Common myeloid progenitor, CD34-positive (primary cell): ENCODE measurements at regions of chr11 and their contacts with region 1.

Region 1: DNA sequence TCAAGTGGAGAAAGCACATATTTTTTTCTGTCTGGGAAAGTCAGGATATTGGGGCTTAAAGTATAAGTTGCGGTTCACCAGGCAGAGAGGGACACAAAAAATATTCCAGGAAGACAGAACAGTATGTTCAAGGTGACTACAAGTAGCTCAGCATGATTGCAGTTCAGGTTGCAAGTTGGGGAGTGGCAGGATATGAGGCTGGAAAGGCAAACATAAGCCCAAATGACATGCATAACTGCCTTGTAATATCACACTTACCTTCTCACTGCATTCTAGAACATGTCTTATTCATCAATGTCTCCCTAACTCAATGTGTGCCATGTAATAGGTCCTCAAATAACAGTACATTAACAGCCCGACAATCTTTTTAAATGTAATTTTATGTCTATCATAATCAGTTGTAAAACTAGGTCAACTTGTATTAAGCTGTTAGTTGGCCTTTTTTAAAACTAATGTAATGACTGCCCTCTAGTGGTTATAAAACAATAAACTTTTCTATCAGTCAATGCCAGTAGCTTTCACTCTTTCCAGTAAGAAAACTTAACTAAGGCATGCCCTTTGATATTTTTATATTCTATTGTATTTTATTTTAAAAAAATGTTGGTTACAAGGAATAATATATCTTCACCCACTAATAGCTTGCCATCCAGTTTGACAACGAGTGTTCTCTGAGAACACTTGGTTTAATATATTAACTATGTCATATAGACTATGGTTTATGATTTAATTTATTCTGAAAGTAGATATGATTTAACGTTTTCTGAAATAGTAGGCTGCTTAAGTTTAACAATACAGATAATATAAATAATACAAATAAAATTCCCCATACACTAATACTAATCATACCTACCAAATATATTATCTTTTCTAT is 39.4 kb upstream of the CFAP300 start:
- DNase-seq: peak; percentile 25 to 66 (median 58)
- H3K4me3 ChIP-seq: no peak overlapping the region
- H3K27ac ChIP-seq: no peak overlapping the region
- H3K4me1 ChIP-seq: no peaks in the 10 kb centered on the region
- H3K27me3 ChIP-seq: peaks cover 4 to 31% (median 9%) of the 10 kb centered on the region in 5 experiments

Region 2: GRCh38 chr11:101848262-101848661 is 159.5 kb before region 1 on chr11:
- CTCF ChIA-PET with region 1: interaction called, 14 read pairs
- POLR2A ChIA-PET with region 1: no interaction called
- DNase-seq: peak; percentile 6 to 42 (median 33)
- H3K4me3 ChIP-seq: no peak overlapping the region
- H3K27ac ChIP-seq: no peak overlapping the region
- H3K4me1 ChIP-seq: no peaks in the 10 kb centered on the region
- H3K27me3 ChIP-seq: no peaks in the 10 kb centered on the region

Region 3: GRCh38 chr11:101860696-101861427 is 146.9 kb before region 1 on chr11:
- CTCF ChIA-PET with region 1: interaction called, 110 read pairs
- POLR2A ChIA-PET with region 1: no interaction called
- DNase-seq: peak; percentile 30 to 60 (median 54)
- H3K4me3 ChIP-seq: no peak overlapping the region
- H3K27ac ChIP-seq: no peak overlapping the region
- H3K4me1 ChIP-seq: no peaks in the 10 kb centered on the region
- H3K27me3 ChIP-seq: peaks cover 0 to 4% (median 0%) of the 10 kb centered on the region in 5 experiments

Region 4: GRCh38 chr11:101866619-101867491 is 140.9 kb before region 1 on chr11:
- CTCF ChIA-PET with region 1: interaction called, 110 read pairs
- POLR2A ChIA-PET with region 1: no interaction called
- DNase-seq: no peak
- H3K4me3 ChIP-seq: no peak overlapping the region
- H3K27ac ChIP-seq: no peak overlapping the region
- H3K4me1 ChIP-seq: no peaks in the 10 kb centered on the region
- H3K27me3 ChIP-seq: peaks cover 1 to 8% (median 2%) of the 10 kb centered on the region in 5 experiments

Region 5: GRCh38 chr11:101996111-101996510 is 11.7 kb before region 1 on chr11:
- CTCF ChIA-PET with region 1: interaction called, 12 read pairs
- POLR2A ChIA-PET with region 1: no interaction called
- DNase-seq: no peak
- H3K4me3 ChIP-seq: no peak overlapping the region
- H3K27ac ChIP-seq: no peak overlapping the region
- H3K4me1 ChIP-seq: no peaks in the 10 kb centered on the region
- H3K27me3 ChIP-seq: no peaks in the 10 kb centered on the region

Region 6: DNA sequence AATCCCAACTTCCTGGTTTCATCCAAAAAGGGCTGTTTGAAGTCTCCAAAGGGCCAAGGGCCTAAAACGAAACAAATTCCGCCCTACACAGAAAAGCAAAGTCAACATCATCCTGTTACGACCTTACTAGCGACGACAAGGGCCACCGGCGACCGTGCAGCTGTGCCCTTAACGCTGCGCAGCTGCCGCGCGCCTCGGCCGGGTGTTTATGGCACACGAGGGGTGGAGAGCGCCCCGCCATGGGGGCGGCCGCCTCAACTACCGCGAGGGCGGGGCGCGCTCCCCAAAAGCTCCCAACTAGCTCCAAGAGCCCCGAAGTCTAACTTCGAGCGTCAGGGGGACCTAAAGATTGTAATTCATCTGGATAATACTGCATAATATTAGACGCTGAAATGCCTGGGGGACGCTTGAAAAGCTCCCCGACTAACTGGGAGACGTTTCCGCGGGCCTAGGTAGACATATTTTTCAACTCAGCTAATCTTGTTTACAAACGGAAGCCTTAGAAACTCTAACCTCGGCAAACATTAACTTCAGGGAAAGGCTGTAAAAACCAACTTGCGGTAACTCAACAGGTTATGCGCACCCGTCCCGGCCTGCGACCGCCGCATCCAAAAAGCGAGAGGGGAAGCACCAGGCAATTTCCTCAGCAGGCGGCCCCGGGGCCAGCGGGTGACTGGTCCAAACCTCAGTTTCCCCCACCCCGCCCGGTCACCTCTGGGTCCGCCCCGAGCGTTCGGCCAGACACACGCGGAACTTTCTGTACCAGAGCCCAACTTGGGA is 444.1 kb after region 1 on chr11:
- CTCF ChIA-PET with region 1: no interaction called
- POLR2A ChIA-PET with region 1: no interaction called
- DNase-seq: peak; percentile 88 to 94 (median 93)
- H3K4me3 ChIP-seq: peak overlapping the region; percentile 89 to 99 (median 91)
- H3K27ac ChIP-seq: peak overlapping the region; percentile 80 to 92
- H3K4me1 ChIP-seq: peaks cover 45 to 74% (median 59%) of the 10 kb centered on the region in 4 experiments
- H3K27me3 ChIP-seq: no peaks in the 10 kb centered on the region